Ovary (tissue), 10 donors: ENCODE measurements at regions of chr3 and their contacts with region 1.

Region 1: DNA sequence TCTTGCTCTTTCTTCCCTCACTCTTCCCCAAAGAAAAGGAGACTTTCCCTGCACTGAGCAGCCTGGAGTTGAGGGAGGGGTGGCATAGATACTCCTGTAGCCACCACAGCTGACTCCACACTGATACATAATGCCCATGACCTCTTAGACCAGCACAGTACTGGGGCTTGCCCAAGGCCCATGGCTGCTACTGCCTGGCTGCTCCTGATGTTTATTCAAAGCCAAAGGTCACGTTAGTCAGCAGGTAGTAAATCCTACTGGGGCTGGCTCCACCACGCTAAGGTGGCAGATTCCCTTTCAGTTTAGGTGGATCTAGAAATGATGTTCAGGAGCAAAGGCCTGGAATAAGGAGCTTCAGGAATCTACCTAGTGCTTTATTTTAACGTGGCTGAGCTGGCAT is 212.7 kb downstream of the C3orf38 start:
- DNase-seq: no peak
- H3K4me3 ChIP-seq: no peak overlapping the region
- H3K27ac ChIP-seq: no peak overlapping the region
- H3K4me1 ChIP-seq: no peaks in the 10 kb centered on the region
- H3K27me3 ChIP-seq: no peaks in the 10 kb centered on the region
- CTCF ChIP-seq: no peak
- EP300 ChIP-seq: no peak
- POLR2A ChIP-seq: no peak

Region 2: GRCh38 chr3:88219138-88219792 is 143.2 kb before region 1 on chr3:
- intact Hi-C with region 1: no loop called
- DNase-seq: peak in 2 of 5 donors; percentile 16 to 25
- H3K4me3 ChIP-seq: no peak overlapping the region
- H3K27ac ChIP-seq: no peak overlapping the region
- H3K4me1 ChIP-seq: no peaks in the 10 kb centered on the region
- H3K27me3 ChIP-seq: no peaks in the 10 kb centered on the region
- CTCF ChIP-seq: no peak
- EP300 ChIP-seq: no peak
- POLR2A ChIP-seq: no peak

Region 3: DNA sequence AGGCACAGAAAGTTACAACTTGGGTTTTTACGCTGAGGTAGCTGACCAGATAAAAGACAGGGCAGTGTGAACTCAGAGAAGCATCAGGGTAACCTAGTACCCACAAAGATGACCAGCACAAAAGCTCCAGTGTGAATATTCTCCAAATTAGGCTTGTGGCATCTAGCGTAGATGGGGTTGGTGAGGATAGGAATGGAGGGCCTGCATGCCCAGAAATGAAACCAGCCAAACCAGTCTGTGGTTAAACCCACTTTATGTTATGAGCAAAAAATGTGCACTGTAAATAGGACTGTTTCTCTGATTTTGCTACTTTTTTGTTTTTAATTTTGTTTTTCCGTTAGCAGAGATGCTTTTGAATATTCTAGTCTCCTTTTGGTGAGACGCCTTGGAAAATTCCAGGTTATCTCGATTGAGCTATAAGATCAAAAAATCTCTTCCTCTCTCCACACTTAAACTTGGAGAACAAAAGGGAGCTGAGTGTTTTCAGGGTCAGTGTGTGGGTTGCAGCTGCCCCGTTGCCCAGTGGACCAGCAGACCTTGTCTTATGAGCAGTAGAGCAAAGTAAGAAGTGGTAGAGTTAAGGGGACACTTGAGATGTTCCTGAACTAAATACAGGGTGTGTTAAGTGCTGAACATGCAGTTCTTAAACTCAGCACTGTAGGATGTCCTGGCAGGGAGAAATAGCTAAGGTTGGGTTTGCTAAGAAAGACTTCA is 79.7 kb before region 1 on chr3:
- intact Hi-C with region 1: no loop called
- DNase-seq: no peak
- H3K4me3 ChIP-seq: no peak overlapping the region
- H3K27ac ChIP-seq: no peak overlapping the region
- H3K4me1 ChIP-seq: peaks cover 3% of the 10 kb centered on the region
- H3K27me3 ChIP-seq: no peaks in the 10 kb centered on the region
- CTCF ChIP-seq: no peak
- EP300 ChIP-seq: no peak
- POLR2A ChIP-seq: no peak

Region 4: GRCh38 chr3:89606151-89606550 is 1243.7 kb after region 1 on chr3:
- intact Hi-C with region 1: loop called in 1 of 4 experiments (anchors 10 kb)
- DNase-seq: no peak
- H3K4me3 ChIP-seq: no peak overlapping the region
- H3K27ac ChIP-seq: no peak overlapping the region
- H3K4me1 ChIP-seq: no peaks in the 10 kb centered on the region
- H3K27me3 ChIP-seq: no peaks in the 10 kb centered on the region
- CTCF ChIP-seq: no peak
- EP300 ChIP-seq: no peak
- POLR2A ChIP-seq: no peak